SK-MEL-5 (cell line): ENCODE measurements at regions of chr13 and their contacts with region 1.

Region 1: GRCh38 chr13:35225582-35225981 is 250.9 kb downstream of the MAB21L1 start:
- DNase-seq: no peak

Region 2: GRCh38 chr13:35512271-35512920 is 286.8 kb after region 1 on chr13:
- in situ Hi-C with region 1: loop called (anchors 25 kb)
- DNase-seq: no peak